ENCODE measurements at regions of chr1 and their contacts with region 1.

Region 1: GRCh38 chr1:204763706-204764427 is 78.3 kb upstream of the LRRN2 start:
- DNase-seq: peak; percentile 93
- H3K4me3 Mint-ChIP-seq: peak overlapping the region; percentile 63
- H3K27ac Mint-ChIP-seq: no peak overlapping the region
- H3K4me1 Mint-ChIP-seq: peaks cover 9% of the 10 kb centered on the region
- H3K27me3 Mint-ChIP-seq: peaks cover 40% of the 10 kb centered on the region

Region 2: GRCh38 chr1:204607910-204608309 is 156.0 kb before region 1 on chr1:
- intact Hi-C with region 1: no loop called
- DNase-seq: no peak
- H3K4me3 Mint-ChIP-seq: no peak overlapping the region
- H3K27ac Mint-ChIP-seq: no peak overlapping the region
- H3K4me1 Mint-ChIP-seq: no peaks in the 10 kb centered on the region
- H3K27me3 Mint-ChIP-seq: peaks cover 4% of the 10 kb centered on the region

Region 3: GRCh38 chr1:204746838-204747442 is 16.9 kb before region 1 on chr1:
- intact Hi-C with region 1: loop called (anchors 1 kb)
- DNase-seq: peak; percentile 85
- H3K4me3 Mint-ChIP-seq: no peak overlapping the region
- H3K27ac Mint-ChIP-seq: no peak overlapping the region
- H3K4me1 Mint-ChIP-seq: peaks cover 2% of the 10 kb centered on the region
- H3K27me3 Mint-ChIP-seq: peaks cover 23% of the 10 kb centered on the region

Region 4: DNA sequence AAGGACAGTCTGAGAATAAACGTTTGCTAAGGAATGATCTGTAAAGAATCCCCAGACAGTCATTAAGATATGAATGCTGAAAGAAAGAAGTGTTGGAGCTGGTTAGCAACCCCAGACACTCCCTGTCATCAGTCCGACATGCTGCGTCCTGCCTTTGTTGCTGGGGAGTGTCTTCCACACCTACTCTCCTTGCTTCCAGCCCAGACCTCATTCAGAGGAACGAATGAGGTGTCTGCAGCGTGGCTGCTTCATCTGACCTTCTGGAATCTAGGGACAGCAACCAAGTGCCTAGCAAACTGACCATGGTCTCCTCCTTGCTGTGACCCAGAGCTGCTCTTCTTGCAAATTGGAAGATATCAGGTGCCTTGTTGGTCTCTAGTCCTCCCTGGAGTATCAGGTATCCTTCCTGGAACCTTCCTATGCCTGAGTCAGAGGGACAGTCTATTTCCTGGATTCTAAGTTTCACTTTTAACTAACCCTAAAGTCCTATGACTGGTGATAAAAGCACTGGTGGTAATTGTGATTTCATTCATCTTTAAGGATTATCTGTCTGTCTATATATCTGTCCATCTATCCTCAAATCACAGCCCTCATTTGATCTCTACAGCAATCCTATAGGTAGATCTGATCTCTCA is 152.1 kb after region 1 on chr1:
- intact Hi-C with region 1: no loop called
- DNase-seq: no peak
- H3K4me3 Mint-ChIP-seq: no peak overlapping the region
- H3K27ac Mint-ChIP-seq: no peak overlapping the region
- H3K4me1 Mint-ChIP-seq: no peaks in the 10 kb centered on the region
- H3K27me3 Mint-ChIP-seq: peaks cover 13% of the 10 kb centered on the region

Measured in activated CD4-positive, alpha-beta T cell treated with anti-CD3 and anti-CD28 coated beads, Interleukin-2, amount 10 ng/mL, durations not matched to agents 24 days and 14 days (primary cell).